Tibial artery (tissue), 4 donors: ENCODE measurements at regions of chr10 and their contacts with region 1.

Region 1: DNA sequence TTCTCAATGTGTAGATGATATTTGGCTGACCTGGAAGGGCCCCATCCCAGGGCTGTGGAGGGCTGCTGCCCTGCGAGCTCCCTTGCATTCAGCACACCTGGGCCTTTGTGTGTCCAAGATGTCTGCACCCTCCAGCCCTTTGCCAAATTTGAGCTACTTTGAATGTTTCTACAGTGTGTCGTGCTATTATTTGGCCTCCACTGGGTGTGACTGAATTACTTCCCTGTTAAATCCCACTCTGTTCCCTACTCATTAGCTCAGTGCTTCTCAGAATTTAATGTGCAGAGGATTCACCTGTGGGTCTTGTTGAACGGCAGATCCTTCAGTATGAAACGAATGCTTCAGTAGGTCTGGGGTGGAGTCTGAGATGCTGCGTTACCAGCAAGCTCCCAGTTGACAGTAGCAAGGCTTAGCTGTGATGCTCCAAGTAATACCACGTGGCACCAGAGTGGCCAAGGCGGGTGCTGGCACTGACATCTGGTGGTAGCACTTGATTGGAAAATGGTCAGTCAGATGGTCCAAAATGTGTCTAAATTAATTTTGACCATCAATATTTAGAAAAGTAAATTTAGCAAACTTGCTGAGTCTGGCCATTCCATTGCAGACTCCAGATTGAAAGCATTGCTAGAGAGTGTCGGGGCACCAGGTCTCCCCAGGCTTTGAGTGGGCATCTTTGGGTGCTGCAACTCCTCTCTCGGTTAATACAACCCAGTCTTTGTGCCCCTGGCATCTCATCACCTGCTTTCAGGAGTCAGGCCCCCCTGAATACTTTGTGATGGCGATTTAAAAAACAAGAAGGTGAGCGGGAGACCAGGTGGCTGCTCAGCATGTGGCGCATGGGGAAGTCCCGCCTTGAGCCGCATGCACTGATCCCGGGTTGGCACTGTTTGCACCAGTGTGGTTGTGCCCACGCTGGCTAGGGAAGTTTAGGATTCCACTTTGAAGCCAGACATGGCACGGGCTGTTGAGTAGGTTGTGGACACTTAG is 130.2 kb downstream of the NT5C2 start:
- DNase-seq: no peak
- H3K4me3 ChIP-seq: no peak overlapping the region
- H3K27ac ChIP-seq: peak overlapping the region in 1 of 2 donors; percentile 5
- H3K4me1 ChIP-seq: peaks cover 0 to 60% (median 8%) of the 10 kb centered on the region in 4 donors
- H3K27me3 ChIP-seq: no peaks in the 10 kb centered on the region
- CTCF ChIP-seq: peak; percentile 33 to 39

Region 2: DNA sequence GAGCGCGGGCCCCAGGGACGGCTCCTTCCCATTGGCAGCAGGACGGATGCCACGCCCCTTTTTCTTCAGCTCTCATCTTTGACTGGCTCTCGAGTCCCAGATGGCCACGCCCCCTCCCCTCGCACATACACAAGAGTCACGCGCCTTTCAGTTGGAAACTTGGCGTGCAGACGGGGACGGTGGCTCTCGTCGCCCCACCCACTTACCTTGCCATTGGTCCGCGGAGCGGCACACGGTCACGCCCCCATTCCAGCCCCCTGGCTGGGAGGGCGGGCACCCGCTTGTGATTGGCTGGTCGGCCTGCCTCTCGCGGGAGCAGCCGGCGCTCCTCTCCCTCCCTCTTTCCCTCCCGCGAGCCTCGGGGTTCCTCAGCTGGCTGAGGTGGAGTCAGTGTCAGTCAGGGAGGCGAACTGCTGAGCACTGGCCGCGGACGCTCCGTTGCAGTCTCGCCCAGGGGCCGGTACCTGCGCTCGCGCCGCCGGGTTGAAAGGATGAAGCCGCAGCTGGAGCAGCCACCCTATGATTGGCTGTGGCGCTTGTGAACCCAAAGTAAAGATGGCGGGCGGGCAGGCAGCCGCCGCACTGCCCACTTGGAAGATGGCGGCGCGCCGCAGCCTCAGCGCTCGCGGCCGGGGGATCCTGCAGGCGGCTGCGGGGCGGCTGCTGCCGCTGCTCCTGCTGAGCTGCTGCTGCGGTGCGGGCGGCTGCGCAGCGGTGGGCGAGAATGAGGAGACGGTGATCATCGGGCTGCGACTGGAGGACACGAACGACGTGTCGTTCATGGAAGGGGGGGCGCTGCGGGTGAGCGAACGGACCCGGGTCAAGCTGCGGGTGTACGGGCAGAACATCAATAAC is 144.7 kb before region 1 on chr10 and contains the start of gene CNNM2:
- intact Hi-C with region 1: loop called (anchors 2 kb)
- DNase-seq: peak; percentile 100
- H3K4me3 ChIP-seq: peak within 1 kb of the TSS; percentile 90 to 93
- H3K27ac ChIP-seq: peak within 1 kb of the TSS; percentile 86 to 95
- H3K4me1 ChIP-seq: peaks cover 0 to 35% (median 11%) of the 10 kb centered on the region in 4 donors
- H3K27me3 ChIP-seq: no peaks in the 10 kb centered on the region
- CTCF ChIP-seq: no peak

Region 3: DNA sequence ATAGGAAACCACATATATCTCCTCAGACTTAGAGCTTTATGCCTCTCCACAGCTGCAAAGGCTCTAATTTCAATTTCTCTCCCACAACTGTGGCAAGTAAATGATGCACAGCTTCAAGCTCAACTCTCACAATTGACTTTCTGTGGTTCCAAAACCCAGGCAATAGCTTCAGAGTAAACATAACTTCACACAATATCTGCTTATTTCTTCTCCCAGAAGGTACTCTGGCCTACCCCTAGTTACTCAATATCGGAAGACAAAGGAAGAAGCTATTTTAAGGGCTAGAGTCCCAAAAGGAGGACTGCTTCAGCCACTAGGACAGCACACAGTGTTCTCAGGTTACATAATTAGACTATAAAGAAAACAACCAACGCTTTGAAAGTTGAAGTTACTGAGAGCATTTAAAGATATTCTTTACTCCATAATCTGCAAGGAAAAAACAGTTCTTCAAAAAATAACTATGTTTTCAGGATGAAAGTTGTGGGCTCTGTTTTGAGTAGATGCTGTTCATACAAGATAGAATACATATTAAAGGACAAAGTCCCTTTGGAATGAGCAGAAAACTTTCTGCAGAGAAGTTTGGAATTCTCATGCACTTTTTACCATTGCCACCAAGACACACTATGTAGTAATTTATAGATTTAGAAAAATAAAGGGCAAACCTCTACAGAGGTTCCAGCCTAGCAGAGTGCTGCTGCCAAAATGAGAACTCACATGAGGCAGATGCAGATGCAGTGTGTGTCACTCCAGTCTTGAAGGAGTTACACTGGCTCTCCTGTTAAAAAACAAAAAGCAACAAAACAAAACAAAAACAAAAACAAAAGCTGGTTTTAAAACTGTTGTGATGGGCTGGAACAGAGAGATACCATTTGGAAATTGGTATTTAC is 48.4 kb after region 1 on chr10:
- intact Hi-C with region 1: no loop called
- DNase-seq: no peak
- H3K4me3 ChIP-seq: peak overlapping the region in 1 of 2 donors; percentile 8
- H3K27ac ChIP-seq: peak overlapping the region; percentile 70 to 76
- H3K4me1 ChIP-seq: peaks cover 0 to 92% (median 36%) of the 10 kb centered on the region in 4 donors
- H3K27me3 ChIP-seq: no peaks in the 10 kb centered on the region
- CTCF ChIP-seq: no peak

Region 4: DNA sequence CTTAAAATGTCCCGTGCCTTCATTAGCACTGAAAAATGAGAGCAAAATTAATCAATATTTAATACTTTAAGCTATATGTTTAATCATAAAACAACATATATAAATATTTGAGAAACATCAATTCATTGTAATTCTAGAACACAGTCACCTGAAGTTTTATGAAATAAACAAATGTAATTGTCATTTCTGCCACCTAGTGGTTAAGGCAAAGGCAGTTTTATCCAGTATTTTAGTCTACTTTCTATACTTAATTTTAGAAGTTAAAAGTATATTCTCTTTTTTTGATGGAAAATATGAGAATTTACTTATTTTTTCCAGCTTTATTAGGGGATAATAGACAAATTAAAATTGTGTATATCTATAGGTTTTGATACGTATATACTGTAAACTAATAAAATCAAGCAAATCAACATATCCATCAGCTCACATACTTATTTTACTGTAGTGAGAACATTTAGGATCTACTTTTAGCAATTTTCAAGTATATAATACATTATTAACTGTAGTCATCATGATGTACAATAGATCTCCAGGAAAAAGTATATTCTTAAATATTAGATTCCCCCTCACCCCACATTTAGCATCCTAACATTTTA is 271.1 kb after region 1 on chr10:
- intact Hi-C with region 1: no loop called
- DNase-seq: no peak
- H3K4me3 ChIP-seq: no peak overlapping the region
- H3K27ac ChIP-seq: no peak overlapping the region
- H3K4me1 ChIP-seq: no peaks in the 10 kb centered on the region
- H3K27me3 ChIP-seq: no peaks in the 10 kb centered on the region
- CTCF ChIP-seq: peak; percentile 41 to 52

Region 5: DNA sequence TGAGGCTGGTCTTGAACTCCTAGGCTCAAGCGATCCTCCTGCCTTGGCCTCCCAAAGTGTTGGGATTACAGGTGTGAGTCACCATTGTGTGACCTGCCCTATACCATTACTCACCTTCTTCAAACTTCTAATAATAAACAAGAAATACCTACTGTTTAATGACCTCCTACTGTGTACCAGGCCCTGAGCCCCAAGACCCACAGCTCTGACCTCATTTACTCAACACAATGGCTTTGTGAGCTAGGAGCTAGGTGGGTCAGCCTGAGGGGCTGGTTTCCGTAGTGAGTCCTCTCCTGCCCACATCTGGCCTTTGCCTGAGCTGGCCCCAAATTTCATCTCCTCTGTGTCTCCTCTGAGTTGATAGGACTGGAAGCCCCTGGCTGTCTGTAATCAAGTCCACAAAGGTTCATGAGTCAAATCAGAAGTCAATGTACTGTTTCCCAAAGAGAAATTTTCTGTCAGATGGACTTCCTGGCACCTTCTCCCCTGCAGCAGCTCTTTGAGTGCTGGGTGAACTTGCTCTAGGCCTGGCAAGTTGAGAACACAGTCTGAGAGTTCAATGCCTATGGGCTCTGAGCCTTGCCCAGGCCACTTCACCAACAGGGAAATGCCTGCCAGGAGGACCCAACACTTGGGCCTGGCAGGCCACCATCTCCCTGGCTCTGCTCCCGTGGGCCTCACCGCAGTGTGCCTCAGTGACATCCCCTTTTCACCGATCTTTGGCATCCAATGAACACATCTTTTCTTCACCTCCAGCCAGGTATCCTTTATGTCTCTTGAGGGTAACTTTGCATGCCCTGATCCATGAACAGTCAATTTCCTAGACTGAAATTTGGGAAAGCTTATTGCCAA is 454.6 kb after region 1 on chr10:
- intact Hi-C with region 1: no loop called
- DNase-seq: no peak
- H3K4me3 ChIP-seq: no peak overlapping the region
- H3K27ac ChIP-seq: no peak overlapping the region
- H3K4me1 ChIP-seq: no peaks in the 10 kb centered on the region
- H3K27me3 ChIP-seq: no peaks in the 10 kb centered on the region
- CTCF ChIP-seq: no peak